ENCODE measurements at regions of chr7 and their contacts with region 1.

Region 1: GRCh38 chr7:5625938-5626337 is 155.5 kb downstream of the RNF216 start:
- DNase-seq: peak; percentile 36
- H3K4me3 ChIP-seq: no peak overlapping the region
- H3K27ac ChIP-seq: peak overlapping the region in 1 of 2 experiments; percentile 64; a peak in 2 of 4 replicates
- H3K4me1 ChIP-seq: peaks cover 16 to 26% of the 10 kb centered on the region in 2 experiments
- H3K27me3 ChIP-seq: no peaks in the 10 kb centered on the region
- CTCF ChIP-seq: peak; percentile 58
- EP300 ChIP-seq: no peak
- RAD21 ChIP-seq: no peak; the same call in 1 of the 2 replicates

Region 2: GRCh38 chr7:5615190-5616070 is 10.5 kb before region 1 on chr7:
- CTCF ChIA-PET with region 1: interaction called, 14 read pairs
- POLR2A ChIA-PET with region 1: interaction called, 5 read pairs
- DNase-seq: peak; percentile 38
- H3K4me3 ChIP-seq: no peak overlapping the region
- H3K27ac ChIP-seq: no peak overlapping the region
- H3K4me1 ChIP-seq: no peaks in the 10 kb centered on the region; a peak in 1 of 4 replicates
- H3K27me3 ChIP-seq: no peaks in the 10 kb centered on the region
- CTCF ChIP-seq: no peak
- EP300 ChIP-seq: no peak
- RAD21 ChIP-seq: no peak

Region 3: DNA sequence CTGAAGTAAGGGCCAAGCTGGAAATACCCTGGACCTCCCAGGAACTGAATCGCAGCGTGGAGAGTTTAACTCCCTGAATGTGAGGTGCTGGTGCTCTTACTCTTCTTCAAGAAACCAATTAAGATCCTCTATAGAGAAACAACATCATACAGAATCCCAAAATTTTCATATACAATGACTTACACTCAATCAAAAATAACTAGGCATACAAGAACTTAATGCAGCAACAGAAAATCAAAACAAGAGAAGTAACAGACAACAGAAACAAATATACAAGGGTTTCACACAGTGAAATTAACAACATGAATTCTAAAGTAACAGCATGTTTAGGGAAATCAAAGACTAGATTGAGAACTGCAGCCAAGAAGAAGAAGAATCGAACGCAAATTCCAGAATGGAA is 117.9 kb after region 1 on chr7:
- CTCF ChIA-PET with region 1: no interaction called
- POLR2A ChIA-PET with region 1: no interaction called
- DNase-seq: no peak
- H3K4me3 ChIP-seq: no peak overlapping the region
- H3K27ac ChIP-seq: no peak overlapping the region
- H3K4me1 ChIP-seq: no peaks in the 10 kb centered on the region
- H3K27me3 ChIP-seq: no peaks in the 10 kb centered on the region
- CTCF ChIP-seq: no peak
- EP300 ChIP-seq: no peak
- RAD21 ChIP-seq: no peak

Measured in SK-N-SH (cell line).